AG04449 (cell line): ENCODE measurements at regions of chr4 and their contacts with region 1.

Region 1: GRCh38 chr4:157978680-157979361 is 194.0 kb downstream of the GASK1B start:
- DNase-seq: no peak
- H3K4me3 ChIP-seq: no peak overlapping the region
- CTCF ChIP-seq: peak; percentile 73

Region 2: DNA sequence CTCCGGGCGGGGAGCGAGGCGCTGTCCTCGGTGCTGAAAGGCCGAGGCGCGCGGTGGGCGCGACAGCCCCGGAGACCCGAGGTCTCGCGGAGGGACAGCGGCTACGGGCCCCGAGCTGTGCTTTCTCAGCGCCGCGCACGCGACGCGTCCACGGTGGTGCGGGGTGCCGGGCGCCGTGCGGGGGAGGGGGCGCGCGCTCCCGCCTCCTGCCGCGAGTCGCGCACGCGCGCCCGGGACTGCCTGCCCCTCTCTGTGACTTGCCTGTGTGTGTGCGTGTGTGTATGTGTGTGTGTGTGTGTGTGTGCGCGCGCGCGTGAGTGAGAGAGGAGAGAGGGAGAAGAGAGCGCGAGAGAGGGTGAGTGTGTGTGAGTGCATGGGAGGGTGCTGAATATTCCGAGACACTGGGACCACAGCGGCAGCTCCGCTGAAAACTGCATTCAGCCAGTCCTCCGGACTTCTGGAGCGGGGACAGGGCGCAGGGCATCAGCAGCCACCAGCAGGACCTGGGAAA is 758.4 kb before region 1 on chr4 and contains the start of gene GRIA2:
- CTCF ChIA-PET with region 1: interaction called, 24 read pairs
- POLR2A ChIA-PET with region 1: no interaction called
- DNase-seq: no peak
- H3K4me3 ChIP-seq: peak within 1 kb of the TSS; percentile 29; the same call in 1 of the 2 replicates
- CTCF ChIP-seq: no peak

Region 3: GRCh38 chr4:157751631-157752030 is 227.2 kb before region 1 on chr4:
- CTCF ChIA-PET with region 1: no interaction called
- POLR2A ChIA-PET with region 1: no interaction called
- DNase-seq: no peak
- H3K4me3 ChIP-seq: no peak overlapping the region
- CTCF ChIP-seq: no peak

Region 4: DNA sequence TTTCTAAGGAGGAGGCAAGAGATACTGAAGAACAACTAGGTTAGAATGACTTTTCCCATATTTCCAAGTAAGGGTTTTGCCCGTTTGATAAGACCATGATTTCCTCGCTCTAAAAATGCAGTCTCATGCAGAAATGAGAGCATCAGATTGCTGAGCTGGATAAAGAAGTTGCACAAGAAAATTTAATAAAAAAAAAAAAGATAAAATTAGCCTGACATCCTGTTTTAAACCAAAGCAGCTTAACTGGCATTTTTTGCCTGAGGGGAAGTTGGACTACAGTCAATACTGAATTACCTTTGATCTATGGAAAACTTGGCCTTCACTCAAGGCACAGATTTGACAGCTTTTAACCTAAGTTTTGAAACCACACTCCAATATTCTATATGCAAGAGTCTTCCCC is 14.4 kb before region 1 on chr4:
- CTCF ChIA-PET with region 1: interaction called, 20 read pairs
- POLR2A ChIA-PET with region 1: no interaction called
- DNase-seq: no peak
- H3K4me3 ChIP-seq: no peak overlapping the region
- CTCF ChIP-seq: no peak